ENCODE measurements at regions of chr12 and their contacts with region 1.

Region 1: GRCh38 chr12:126874427-126875026 is 1392.4 kb upstream of the TMEM132C start:
- DNase-seq: peak; percentile 45 to 61 (median 58)
- H3K4me3 ChIP-seq: no peak overlapping the region
- H3K4me3 Mint-ChIP-seq: no peak overlapping the region
- H3K27ac ChIP-seq: no peak overlapping the region
- H3K27ac Mint-ChIP-seq: peak overlapping the region in 2 of 7 donors; percentile 43 to 81
- H3K4me1 ChIP-seq: no peaks in the 10 kb centered on the region
- H3K4me1 Mint-ChIP-seq: peaks cover 0 to 7% (median 2%) of the 10 kb centered on the region in 4 donors
- H3K27me3 ChIP-seq: no peaks in the 10 kb centered on the region
- H3K27me3 Mint-ChIP-seq: peaks cover 1% of the 10 kb centered on the region in 2 donors

Region 2: DNA sequence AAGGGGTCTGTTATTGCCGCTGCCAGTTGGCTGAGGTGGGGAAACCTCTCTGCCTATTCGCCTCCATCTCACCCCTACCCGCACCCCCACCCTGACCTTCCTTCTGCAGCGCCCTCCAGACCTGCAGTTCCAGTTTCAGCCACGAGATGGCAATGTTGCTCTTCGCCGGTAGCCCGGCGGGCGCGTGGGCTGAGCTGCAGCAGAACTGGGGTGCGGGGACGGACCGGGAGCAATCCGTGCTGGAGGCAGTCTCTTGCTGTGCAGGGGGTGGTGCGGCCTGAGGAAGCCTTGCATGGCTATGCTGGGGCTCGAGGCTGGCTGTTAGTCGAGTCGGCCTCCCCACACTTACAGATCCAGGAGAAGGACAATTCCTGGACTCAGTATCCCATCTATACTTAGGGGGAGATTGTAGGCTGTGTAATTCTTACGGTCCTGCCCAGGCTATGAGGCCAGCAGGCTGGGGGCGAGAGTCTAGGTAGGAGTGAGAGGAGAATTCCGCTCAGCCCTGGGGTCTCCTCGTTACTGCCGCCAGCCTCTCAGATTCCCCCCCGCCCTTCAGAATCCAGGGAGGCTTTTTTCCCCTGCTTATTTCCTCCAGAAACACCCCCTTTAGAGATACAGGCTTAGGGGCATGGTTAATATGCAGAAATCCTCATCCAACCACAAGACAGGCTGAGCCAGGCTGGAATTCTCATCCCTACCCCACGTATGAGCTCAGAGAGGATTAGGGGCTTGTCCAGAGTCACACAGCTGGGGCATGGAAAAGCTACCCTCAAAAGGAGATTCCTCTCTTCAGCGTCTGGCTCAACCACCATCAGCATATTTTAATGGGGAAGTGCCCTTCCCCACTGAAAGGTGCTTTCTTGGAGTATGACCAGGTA is 1691.1 kb before region 1 on chr12:
- CTCF ChIA-PET with region 1: interaction called, 15 read pairs
- POLR2A ChIA-PET with region 1: no interaction called
- intact Hi-C with region 1: no loop called
- DNase-seq: peak; percentile 51 to 70 (median 62)
- H3K4me3 ChIP-seq: no peak overlapping the region
- H3K4me3 Mint-ChIP-seq: peak overlapping the region in 2 of 8 donors; percentile 34 to 64
- H3K27ac ChIP-seq: no peak overlapping the region
- H3K27ac Mint-ChIP-seq: no peak overlapping the region
- H3K4me1 ChIP-seq: peaks cover 11% of the 10 kb centered on the region
- H3K4me1 Mint-ChIP-seq: peaks cover 3 to 19% (median 9%) of the 10 kb centered on the region in 4 donors
- H3K27me3 ChIP-seq: peaks cover 27% of the 10 kb centered on the region
- H3K27me3 Mint-ChIP-seq: peaks cover 42 to 53% of the 10 kb centered on the region in 2 donors

Region 3: GRCh38 chr12:126069549-126070165 is 804.9 kb before region 1 on chr12:
- CTCF ChIA-PET with region 1: interaction called, 10 read pairs
- POLR2A ChIA-PET with region 1: no interaction called
- intact Hi-C with region 1: no loop called
- DNase-seq: peak in 4 of 5 donors; percentile 1 to 15 (median 6)
- H3K4me3 ChIP-seq: no peak overlapping the region
- H3K4me3 Mint-ChIP-seq: no peak overlapping the region
- H3K27ac ChIP-seq: no peak overlapping the region
- H3K27ac Mint-ChIP-seq: no peak overlapping the region
- H3K4me1 ChIP-seq: no peaks in the 10 kb centered on the region
- H3K4me1 Mint-ChIP-seq: no peaks in the 10 kb centered on the region
- H3K27me3 ChIP-seq: no peaks in the 10 kb centered on the region
- H3K27me3 Mint-ChIP-seq: no peaks in the 10 kb centered on the region

Region 4: DNA sequence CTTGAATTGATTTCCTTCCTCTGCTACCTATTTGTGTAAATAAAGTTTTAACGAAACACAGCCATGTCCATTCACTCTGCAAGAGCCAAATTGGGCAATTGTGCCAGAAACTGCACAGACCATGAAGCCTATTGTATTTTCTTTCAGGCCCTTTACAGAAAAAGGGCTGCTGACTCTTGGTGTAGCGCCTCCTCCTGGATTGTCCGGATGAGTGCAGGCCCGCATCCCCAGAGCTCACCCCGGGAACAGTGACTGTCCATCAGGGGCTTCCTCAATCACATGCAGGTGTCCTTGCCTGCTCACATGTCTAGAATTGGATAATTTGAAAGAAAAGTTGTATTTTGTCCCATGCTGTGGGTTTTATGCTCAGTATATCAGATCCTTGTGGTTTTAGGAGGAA is 527.1 kb before region 1 on chr12:
- CTCF ChIA-PET with region 1: no interaction called
- POLR2A ChIA-PET with region 1: no interaction called
- intact Hi-C with region 1: loop called (anchors 2 kb)
- DNase-seq: no peak
- H3K4me3 ChIP-seq: no peak overlapping the region
- H3K4me3 Mint-ChIP-seq: no peak overlapping the region
- H3K27ac ChIP-seq: no peak overlapping the region
- H3K27ac Mint-ChIP-seq: no peak overlapping the region
- H3K4me1 ChIP-seq: no peaks in the 10 kb centered on the region
- H3K4me1 Mint-ChIP-seq: peaks cover 0 to 5% (median under 1%) of the 10 kb centered on the region in 4 donors
- H3K27me3 ChIP-seq: no peaks in the 10 kb centered on the region
- H3K27me3 Mint-ChIP-seq: no peaks in the 10 kb centered on the region

Region 5: DNA sequence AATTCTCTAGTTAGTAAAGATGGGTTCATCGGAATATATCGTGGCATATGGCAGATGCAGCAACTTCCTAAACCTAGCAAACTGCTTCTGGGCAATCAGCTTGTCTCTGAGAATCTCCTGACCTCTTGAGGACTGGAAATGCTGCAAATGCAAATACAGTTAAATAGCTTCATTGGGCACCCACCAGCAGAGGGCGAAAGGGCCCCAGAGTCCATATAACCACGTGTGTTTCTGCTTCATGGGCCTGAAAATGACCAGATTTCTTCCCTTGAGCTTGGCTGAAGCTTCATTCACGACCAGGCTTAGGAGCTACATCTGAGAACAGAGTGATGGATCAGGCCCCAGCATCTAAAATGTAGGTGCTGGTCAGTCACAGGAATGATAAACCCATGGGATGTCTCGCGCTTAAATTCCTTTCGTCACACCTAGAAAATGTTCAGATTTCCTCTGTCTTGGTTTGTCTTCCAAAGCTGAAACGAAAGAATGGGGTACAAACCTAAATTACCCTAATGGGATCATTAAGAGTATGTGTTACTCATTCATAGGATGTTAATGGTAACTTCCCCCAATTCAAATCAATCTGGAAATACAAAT is 90.1 kb before region 1 on chr12:
- CTCF ChIA-PET with region 1: interaction called, 51 read pairs
- POLR2A ChIA-PET with region 1: interaction called, 4 read pairs
- intact Hi-C with region 1: loop called (anchors 2 kb)
- DNase-seq: peak in 3 of 5 donors; percentile 17 to 45 (median 26)
- H3K4me3 ChIP-seq: no peak overlapping the region
- H3K4me3 Mint-ChIP-seq: no peak overlapping the region
- H3K27ac ChIP-seq: no peak overlapping the region
- H3K27ac Mint-ChIP-seq: peak overlapping the region in 3 of 7 donors; percentile 1 to 47 (median 38)
- H3K4me1 ChIP-seq: peaks cover 4% of the 10 kb centered on the region
- H3K4me1 Mint-ChIP-seq: peaks cover 8 to 41% (median 23%) of the 10 kb centered on the region in 4 donors
- H3K27me3 ChIP-seq: no peaks in the 10 kb centered on the region
- H3K27me3 Mint-ChIP-seq: peaks cover 0 to 1% of the 10 kb centered on the region in 2 donors

Measured in CD4-positive, alpha-beta memory T cell (primary cell).